Panc1 (cell line): ENCODE measurements at regions of chr15 and their contacts with region 1.

Region 1: GRCh38 chr15:71278989-71279756 is 163.9 kb downstream of the THSD4 start:
- DNase-seq: no peak
- ATAC-seq: no peak; the same call in 1 of the 2 replicates
- H3K4me3 ChIP-seq: no peak overlapping the region
- H3K27ac ChIP-seq: peak overlapping the region; percentile 26; the same call in 1 of the 2 replicates
- H3K4me1 ChIP-seq: peaks cover 28% of the 10 kb centered on the region
- H3K27me3 ChIP-seq: no peaks in the 10 kb centered on the region
- CTCF ChIP-seq: no peak

Region 2: DNA sequence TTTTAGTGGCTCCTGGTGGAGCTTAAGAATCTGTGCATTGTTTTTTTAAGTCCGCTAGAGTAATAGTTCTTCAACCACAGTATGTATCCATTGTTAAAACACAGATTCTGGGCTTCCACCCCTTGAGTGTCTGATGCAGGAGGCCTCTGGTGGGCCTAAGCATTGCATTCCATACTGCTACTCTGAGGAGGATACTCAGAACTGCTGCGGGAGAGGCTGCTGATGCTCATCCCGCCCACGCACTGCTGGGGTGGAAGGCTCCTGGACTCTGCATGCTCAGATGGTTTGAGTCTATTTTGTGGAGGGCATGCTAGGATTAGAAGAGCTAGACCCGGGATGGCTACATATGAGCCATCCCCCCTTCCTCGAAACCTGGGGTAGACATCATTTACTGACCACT is 89.5 kb before region 1 on chr15:
- CTCF ChIA-PET with region 1: no interaction called
- POLR2A ChIA-PET with region 1: interaction called, 16 read pairs
- in situ Hi-C with region 1: no loop called
- intact Hi-C with region 1: no loop called
- DNase-seq: no peak
- ATAC-seq: no peak
- H3K4me3 ChIP-seq: no peak overlapping the region
- H3K27ac ChIP-seq: no peak overlapping the region
- H3K4me1 ChIP-seq: no peaks in the 10 kb centered on the region
- H3K27me3 ChIP-seq: no peaks in the 10 kb centered on the region
- CTCF ChIP-seq: no peak